Calu3 (cell line): ENCODE measurements at regions of chr17 and their contacts with region 1.

Region 1: DNA sequence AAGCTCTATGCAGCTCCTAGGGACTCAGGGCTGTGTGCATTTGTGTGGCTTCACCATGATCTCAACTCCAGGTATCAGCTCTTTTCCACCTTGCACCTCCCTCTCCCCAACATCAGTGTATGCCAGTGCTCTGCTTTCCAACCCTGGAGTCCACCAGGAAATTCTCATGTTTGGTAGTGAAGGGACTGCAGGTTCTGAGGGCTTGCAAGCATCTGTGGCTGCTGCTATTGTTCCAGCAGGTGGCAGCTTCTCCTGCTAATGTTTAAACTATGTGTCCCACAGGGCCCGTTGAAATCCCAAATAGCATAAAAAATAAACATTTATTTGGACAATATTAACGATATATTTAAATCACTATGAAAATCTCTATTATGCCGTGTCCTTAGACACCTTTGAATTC is 82.0 kb downstream of the RGS9 start:
- DNase-seq: no peak
- H3K4me3 Mint-ChIP-seq: no peak overlapping the region
- H3K27ac Mint-ChIP-seq: no peak overlapping the region
- H3K4me1 Mint-ChIP-seq: no peaks in the 10 kb centered on the region
- H3K27me3 Mint-ChIP-seq: peaks cover 12% of the 10 kb centered on the region
- CTCF ChIP-seq: no peak

Region 2: DNA sequence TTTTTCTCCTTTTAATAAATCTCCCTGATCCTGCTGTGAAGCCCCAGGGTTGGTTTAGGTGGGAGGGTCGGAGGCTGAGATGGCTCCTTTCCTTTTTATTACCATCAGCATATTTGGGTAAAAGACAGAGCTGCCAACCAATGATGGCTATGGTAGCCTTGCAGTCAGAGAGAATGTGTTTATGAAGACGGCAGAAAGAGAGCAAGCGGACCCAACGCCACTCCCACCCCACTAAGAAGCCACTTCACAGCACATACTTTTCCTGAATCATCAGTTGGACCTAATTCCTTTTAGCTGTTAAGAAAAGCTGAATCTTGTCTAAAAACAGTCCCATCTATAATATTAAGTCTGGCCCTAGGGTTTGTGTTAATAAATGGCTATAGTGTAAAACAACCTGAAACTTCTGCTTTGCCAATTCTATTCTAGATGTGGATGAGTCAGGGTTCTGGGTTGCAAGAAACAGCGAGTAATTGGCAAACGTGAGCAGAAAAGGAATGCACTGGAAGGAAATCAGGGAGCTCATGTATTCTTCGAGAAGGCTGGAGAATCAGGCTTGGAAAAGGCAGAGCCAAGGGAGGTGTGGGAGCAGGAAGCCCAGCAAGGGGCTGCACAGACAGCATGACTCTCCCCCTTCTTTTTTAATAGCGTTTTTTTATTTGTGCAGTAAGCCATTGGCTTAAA is 1049.3 kb after region 1 on chr17:
- CTCF ChIA-PET with region 1: interaction called, 11 read pairs
- intact Hi-C with region 1: no loop called
- DNase-seq: no peak
- H3K4me3 Mint-ChIP-seq: no peak overlapping the region
- H3K27ac Mint-ChIP-seq: no peak overlapping the region
- H3K4me1 Mint-ChIP-seq: peaks cover 39% of the 10 kb centered on the region
- H3K27me3 Mint-ChIP-seq: no peaks in the 10 kb centered on the region
- CTCF ChIP-seq: no peak